CD8-positive, alpha-beta T cell (primary cell): ENCODE measurements at regions of chr11 and their contacts with region 1.

Region 1: GRCh38 chr11:1694064-1694845 is 2.7 kb upstream of the KRTAP5-6 start:
- DNase-seq: peak; percentile 63 to 90 (median 82)
- ATAC-seq: peak; percentile 85
- H3K4me3 ChIP-seq: no peak overlapping the region
- H3K4me3 Mint-ChIP-seq: no peak overlapping the region
- H3K27ac ChIP-seq: no peak overlapping the region
- H3K27ac Mint-ChIP-seq: no peak overlapping the region
- H3K4me1 ChIP-seq: peaks cover 16% of the 10 kb centered on the region
- H3K4me1 Mint-ChIP-seq: peaks cover 3% of the 10 kb centered on the region
- H3K27me3 ChIP-seq: peaks cover 0 to 7% of the 10 kb centered on the region in 2 experiments
- H3K27me3 Mint-ChIP-seq: peaks cover 16% of the 10 kb centered on the region
- CTCF ChIP-seq: peak; percentile 64

Region 2: GRCh38 chr11:1608363-1608762 is 85.9 kb before region 1 on chr11 and contains the start of gene KRTAP5-3:
- CTCF ChIA-PET with region 1: no interaction called
- POLR2A ChIA-PET with region 1: no interaction called
- intact Hi-C with region 1: no loop called
- DNase-seq: no peak
- ATAC-seq: no peak
- H3K4me3 ChIP-seq: no peak within 1 kb of the TSS
- H3K4me3 Mint-ChIP-seq: no peak within 1 kb of the TSS
- H3K27ac ChIP-seq: no peak within 1 kb of the TSS
- H3K27ac Mint-ChIP-seq: no peak within 1 kb of the TSS
- H3K4me1 ChIP-seq: no peaks in the 10 kb centered on the region
- H3K4me1 Mint-ChIP-seq: no peaks in the 10 kb centered on the region
- H3K27me3 ChIP-seq: peaks cover 0 to 2% of the 10 kb centered on the region in 2 experiments
- H3K27me3 Mint-ChIP-seq: peaks cover 27% of the 10 kb centered on the region
- CTCF ChIP-seq: no peak
- total RNA-seq, gene KRTAP5-3: not detected

Region 3: GRCh38 chr11:1652771-1653540 is 41.3 kb before region 1 on chr11:
- CTCF ChIA-PET with region 1: interaction called, 48 read pairs
- POLR2A ChIA-PET with region 1: no interaction called
- intact Hi-C with region 1: loop called (anchors 1 kb)
- DNase-seq: peak; percentile 59 to 89 (median 79)
- ATAC-seq: peak; percentile 97
- H3K4me3 ChIP-seq: no peak overlapping the region
- H3K4me3 Mint-ChIP-seq: no peak overlapping the region
- H3K27ac ChIP-seq: no peak overlapping the region
- H3K27ac Mint-ChIP-seq: no peak overlapping the region
- H3K4me1 ChIP-seq: no peaks in the 10 kb centered on the region
- H3K4me1 Mint-ChIP-seq: no peaks in the 10 kb centered on the region
- H3K27me3 ChIP-seq: peaks cover 3 to 12% of the 10 kb centered on the region in 2 experiments
- H3K27me3 Mint-ChIP-seq: peaks cover 23% of the 10 kb centered on the region
- CTCF ChIP-seq: peak; percentile 99

Region 4: GRCh38 chr11:1717745-1718144 is 23.5 kb after region 1 on chr11:
- CTCF ChIA-PET with region 1: interaction called, 16 read pairs
- POLR2A ChIA-PET with region 1: no interaction called
- intact Hi-C with region 1: no loop called
- DNase-seq: no peak
- ATAC-seq: no peak
- H3K4me3 ChIP-seq: no peak overlapping the region
- H3K4me3 Mint-ChIP-seq: no peak overlapping the region
- H3K27ac ChIP-seq: no peak overlapping the region
- H3K27ac Mint-ChIP-seq: no peak overlapping the region
- H3K4me1 ChIP-seq: no peaks in the 10 kb centered on the region
- H3K4me1 Mint-ChIP-seq: no peaks in the 10 kb centered on the region
- H3K27me3 ChIP-seq: no peaks in the 10 kb centered on the region
- H3K27me3 Mint-ChIP-seq: no peaks in the 10 kb centered on the region
- CTCF ChIP-seq: no peak

Region 5: DNA sequence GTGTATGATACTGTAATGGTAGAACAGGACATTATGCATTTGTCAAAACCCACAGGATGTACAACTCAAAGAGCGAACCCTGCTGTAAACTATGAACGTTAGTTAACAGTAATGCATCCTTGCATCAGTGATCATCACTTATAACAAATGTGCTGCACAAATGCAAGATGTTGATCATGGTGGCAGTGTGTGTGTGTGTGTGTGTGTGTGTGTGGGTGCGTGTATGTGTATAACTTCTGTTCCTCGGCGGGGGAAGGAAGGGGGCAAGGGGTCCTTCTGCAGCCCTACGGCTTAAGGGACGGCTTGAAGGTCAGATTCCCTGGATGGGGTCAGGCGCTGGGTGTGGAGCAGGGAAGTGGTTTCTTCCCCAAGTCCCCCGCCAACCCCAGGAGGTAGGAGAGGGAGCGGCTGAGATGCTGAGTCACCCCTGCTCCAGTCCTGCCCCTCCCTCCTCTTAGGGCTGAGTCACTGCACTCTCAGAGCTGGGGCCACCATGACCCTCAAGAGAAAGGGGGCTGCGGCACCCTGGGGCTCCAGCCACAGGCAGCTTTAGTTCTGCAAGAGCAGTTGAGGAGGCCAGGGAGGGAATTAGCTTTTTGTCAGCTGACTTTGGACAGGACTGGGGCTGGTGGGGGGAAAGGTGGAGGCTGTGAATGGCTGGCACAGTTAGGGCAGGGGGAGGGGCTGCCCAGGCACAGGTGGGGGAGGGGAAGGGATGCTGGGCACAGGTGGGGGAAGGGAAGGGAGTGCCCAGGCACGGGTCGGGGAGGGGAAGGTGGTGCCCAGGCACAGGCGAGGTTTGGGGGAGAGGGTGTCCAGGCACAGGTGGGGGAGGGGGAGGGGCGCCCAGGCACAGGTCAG is 78.2 kb after region 1 on chr11:
- CTCF ChIA-PET with region 1: interaction called, 24 read pairs
- POLR2A ChIA-PET with region 1: no interaction called
- intact Hi-C with region 1: loop called (anchors 2 to 5 kb)
- DNase-seq: peak in 5 of 9 experiments; percentile 45 to 69 (median 61)
- ATAC-seq: peak; percentile 90
- H3K4me3 ChIP-seq: no peak overlapping the region
- H3K4me3 Mint-ChIP-seq: peak overlapping the region; percentile 17
- H3K27ac ChIP-seq: peak overlapping the region in 1 of 2 experiments; percentile 31
- H3K27ac Mint-ChIP-seq: peak overlapping the region; percentile 19
- H3K4me1 ChIP-seq: peaks cover 11% of the 10 kb centered on the region
- H3K4me1 Mint-ChIP-seq: peaks cover 17% of the 10 kb centered on the region
- H3K27me3 ChIP-seq: no peaks in the 10 kb centered on the region
- H3K27me3 Mint-ChIP-seq: no peaks in the 10 kb centered on the region
- CTCF ChIP-seq: no peak

Region 6: DNA sequence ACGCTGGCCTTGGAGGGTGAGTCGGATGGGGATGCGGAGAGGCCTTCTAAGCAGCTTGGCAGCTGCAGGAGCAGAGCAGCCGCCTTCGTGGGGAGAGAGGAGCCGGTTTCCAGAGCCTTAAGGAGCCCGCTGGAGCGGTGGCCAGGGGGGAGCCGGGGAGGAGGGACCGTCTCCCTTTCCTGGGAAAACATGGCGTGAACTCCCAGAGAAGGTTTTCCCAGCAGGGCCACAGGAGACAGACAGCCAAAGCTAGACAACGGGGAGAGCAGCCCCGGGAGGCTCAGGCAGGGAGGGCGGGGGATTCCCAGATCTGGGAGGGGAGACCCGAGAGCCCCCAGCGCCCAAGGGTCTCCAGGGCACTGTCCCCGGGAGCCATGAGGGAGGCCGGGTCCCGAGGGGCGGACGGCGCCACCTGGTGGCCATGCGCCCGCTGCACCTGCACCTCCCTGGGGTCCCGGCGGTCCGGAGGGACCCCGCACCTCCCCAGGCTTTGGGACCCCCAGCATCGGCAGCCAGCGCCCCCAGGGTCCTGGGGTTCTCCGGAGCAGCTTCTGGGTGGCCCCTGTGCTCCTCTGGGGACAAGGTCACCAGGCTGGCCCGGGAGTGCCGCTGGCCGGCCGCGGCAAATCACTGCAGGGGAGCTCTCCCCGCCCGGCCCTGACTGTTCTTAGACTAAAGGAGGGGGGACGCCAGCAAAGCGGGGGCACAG is 138.1 kb after region 1 on chr11:
- CTCF ChIA-PET with region 1: interaction called, 513 read pairs
- POLR2A ChIA-PET with region 1: interaction called, 7 read pairs
- intact Hi-C with region 1: loop called in 1 of 2 experiments (anchors 1 kb)
- DNase-seq: peak; percentile 43 to 87 (median 70)
- ATAC-seq: peak; percentile 77
- H3K4me3 ChIP-seq: no peak overlapping the region
- H3K4me3 Mint-ChIP-seq: no peak overlapping the region
- H3K27ac ChIP-seq: no peak overlapping the region
- H3K27ac Mint-ChIP-seq: no peak overlapping the region
- H3K4me1 ChIP-seq: peaks cover 7% of the 10 kb centered on the region
- H3K4me1 Mint-ChIP-seq: no peaks in the 10 kb centered on the region
- H3K27me3 ChIP-seq: peaks cover 0 to 6% of the 10 kb centered on the region in 2 experiments
- H3K27me3 Mint-ChIP-seq: peaks cover 2% of the 10 kb centered on the region
- CTCF ChIP-seq: peak; percentile 95

Region 7: GRCh38 chr11:1882519-1883238 is 188.4 kb after region 1 on chr11:
- CTCF ChIA-PET with region 1: interaction called, 15 read pairs
- POLR2A ChIA-PET with region 1: no interaction called
- intact Hi-C with region 1: loop called in 1 of 2 experiments (anchors 2 kb)
- DNase-seq: peak; percentile 57 to 91 (median 83)
- ATAC-seq: peak; percentile 91
- H3K4me3 ChIP-seq: no peak overlapping the region
- H3K4me3 Mint-ChIP-seq: no peak overlapping the region
- H3K27ac ChIP-seq: no peak overlapping the region
- H3K27ac Mint-ChIP-seq: no peak overlapping the region
- H3K4me1 ChIP-seq: peaks cover 14% of the 10 kb centered on the region
- H3K4me1 Mint-ChIP-seq: peaks cover 12% of the 10 kb centered on the region
- H3K27me3 ChIP-seq: no peaks in the 10 kb centered on the region
- H3K27me3 Mint-ChIP-seq: no peaks in the 10 kb centered on the region
- CTCF ChIP-seq: peak; percentile 69

Region 8: DNA sequence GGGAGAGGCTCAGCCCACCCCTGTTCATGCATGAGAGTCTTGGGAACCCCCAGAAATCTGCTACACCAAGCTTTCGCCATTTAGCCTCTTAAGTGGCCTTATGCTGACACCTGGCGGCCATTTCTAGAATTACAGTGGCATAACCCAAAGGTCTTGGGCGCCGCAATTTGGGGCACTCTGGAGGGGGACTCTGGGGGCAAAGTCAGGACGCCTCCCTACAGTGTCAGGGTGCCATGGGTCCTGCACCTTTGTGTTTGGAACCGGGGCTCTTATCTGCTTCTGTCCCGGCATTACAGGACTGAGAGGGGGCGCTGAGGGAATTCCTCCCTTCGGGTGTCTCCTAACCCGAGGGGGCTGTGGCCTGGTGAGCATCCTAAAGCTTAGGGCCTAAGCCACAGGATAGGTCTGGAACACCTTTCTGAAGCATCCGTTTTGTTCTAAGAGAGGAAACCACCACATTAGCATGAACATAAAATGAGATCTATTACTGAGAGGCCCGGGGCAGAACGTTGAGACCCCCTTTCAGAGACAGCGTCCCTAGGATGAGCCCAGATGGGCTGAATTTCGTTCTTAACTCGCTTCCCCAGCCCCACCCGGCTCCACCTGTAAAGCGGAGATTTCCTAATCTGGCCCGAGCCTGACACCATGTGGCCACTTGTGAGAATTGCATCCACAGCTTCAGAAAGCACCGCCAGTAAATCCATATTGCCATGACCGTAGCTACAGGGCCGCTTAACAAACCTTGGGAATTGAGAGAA is 457.4 kb after region 1 on chr11:
- CTCF ChIA-PET with region 1: interaction called, 91 read pairs
- POLR2A ChIA-PET with region 1: no interaction called
- intact Hi-C with region 1: loop called (anchors 1 kb)
- DNase-seq: peak; percentile 68 to 88 (median 82)
- ATAC-seq: peak; percentile 90
- H3K4me3 ChIP-seq: peak overlapping the region; percentile 14 to 18
- H3K4me3 Mint-ChIP-seq: peak overlapping the region; percentile 56
- H3K27ac ChIP-seq: peak overlapping the region in 1 of 2 experiments; percentile 45
- H3K27ac Mint-ChIP-seq: no peak overlapping the region
- H3K4me1 ChIP-seq: peaks cover 6% of the 10 kb centered on the region
- H3K4me1 Mint-ChIP-seq: peaks cover 6% of the 10 kb centered on the region
- H3K27me3 ChIP-seq: peaks cover 4 to 5% of the 10 kb centered on the region in 2 experiments
- H3K27me3 Mint-ChIP-seq: peaks cover 30% of the 10 kb centered on the region
- CTCF ChIP-seq: peak; percentile 74